ENCODE measurements at regions of chr17 and their contacts with region 1.

Region 1: DNA sequence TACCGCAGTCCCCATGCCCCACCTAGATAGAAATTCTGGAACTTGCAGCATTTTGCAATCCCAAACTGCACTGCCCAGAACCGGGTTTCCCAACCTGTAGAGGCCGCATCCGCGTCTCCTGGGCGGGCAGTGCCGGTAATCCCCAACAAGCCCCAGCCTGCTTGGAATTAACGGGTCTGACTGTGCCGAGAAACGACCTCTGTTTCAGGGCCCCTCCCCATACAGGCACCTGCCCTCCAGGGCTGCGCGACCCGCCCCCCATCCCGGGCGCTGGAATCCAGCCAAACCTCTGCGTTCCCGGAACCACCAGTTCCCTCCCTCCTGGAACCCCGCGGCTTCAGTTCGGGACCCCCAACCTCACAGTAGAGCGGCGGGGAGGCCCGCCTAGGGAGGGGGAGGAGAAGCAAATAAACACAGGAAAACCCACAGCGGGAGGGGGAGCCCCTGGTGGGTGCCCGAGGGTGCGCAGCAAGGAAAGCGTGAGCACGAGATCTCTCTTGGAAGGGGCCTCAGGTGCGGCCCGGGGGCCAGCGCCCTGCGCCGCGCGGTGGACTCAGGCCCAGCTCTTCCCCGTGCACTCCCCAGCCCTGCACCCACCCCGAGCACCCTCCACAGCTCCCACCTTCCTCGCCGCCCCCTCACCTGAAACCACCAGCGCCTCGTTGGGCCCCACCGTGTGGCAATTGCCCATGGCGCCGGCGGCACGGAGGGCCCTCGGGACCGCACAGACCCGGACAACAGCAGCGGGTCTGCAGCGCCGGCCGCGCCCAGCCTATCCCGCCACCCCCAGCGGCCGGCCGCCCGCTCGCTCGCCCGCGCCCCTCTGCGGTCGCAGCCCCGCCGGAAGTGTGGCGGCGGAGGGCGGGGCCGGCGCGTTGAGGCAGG is at the start of gene FLOT2:
- DNase-seq: peak; percentile 87
- H3K4me3 ChIP-seq: peak within 1 kb of the TSS; percentile 69 to 93 (median 83)
- H3K27ac ChIP-seq: peak within 1 kb of the TSS; percentile 82 to 96 (median 92)
- H3K4me1 ChIP-seq: peaks cover 0 to 35% (median 29%) of the 10 kb centered on the region in 4 donors
- H3K27me3 ChIP-seq: no peaks in the 10 kb centered on the region
- CTCF ChIP-seq: peak in 3 of 4 experiments; percentile 12 to 34 (median 27)
- EP300 ChIP-seq: peak in 2 of 4 donors; percentile 10 to 61
- POLR2A ChIP-seq: no peak
- total RNA-seq, gene FLOT2: 38.5 to 72.5 (median 52.4) TPM

Region 2: DNA sequence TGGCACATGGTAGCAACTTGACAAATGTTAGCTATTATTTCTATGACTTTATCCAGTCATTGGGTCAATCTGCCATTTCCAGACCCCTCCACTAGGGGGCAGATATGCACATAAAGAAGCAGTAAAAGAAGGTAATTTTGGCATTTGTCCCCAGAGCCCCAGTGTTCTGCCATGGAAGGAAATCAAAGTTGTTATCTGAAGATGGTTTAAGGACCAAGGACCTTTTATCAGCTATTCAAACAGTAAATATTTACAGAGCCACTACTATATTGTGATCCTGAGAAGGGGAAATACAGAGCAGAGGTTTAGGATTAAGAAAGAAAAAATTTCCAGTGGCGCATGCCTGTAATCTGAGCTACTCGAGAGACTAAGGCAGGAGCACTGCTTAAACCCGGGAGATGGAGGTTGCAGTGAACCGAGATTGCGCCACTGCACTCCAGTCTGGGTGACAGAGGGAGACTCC is 133.3 kb before region 1 on chr17:
- intact Hi-C with region 1: loop called (anchors 5 kb)
- DNase-seq: peak; percentile 88
- H3K4me3 ChIP-seq: no peak overlapping the region
- H3K27ac ChIP-seq: peak overlapping the region in 1 of 4 donors; percentile 27
- H3K4me1 ChIP-seq: peaks cover 0 to 18% (median 6%) of the 10 kb centered on the region in 4 donors
- H3K27me3 ChIP-seq: no peaks in the 10 kb centered on the region
- CTCF ChIP-seq: peak; percentile 65 to 86 (median 84)
- EP300 ChIP-seq: no peak
- POLR2A ChIP-seq: no peak

Region 3: DNA sequence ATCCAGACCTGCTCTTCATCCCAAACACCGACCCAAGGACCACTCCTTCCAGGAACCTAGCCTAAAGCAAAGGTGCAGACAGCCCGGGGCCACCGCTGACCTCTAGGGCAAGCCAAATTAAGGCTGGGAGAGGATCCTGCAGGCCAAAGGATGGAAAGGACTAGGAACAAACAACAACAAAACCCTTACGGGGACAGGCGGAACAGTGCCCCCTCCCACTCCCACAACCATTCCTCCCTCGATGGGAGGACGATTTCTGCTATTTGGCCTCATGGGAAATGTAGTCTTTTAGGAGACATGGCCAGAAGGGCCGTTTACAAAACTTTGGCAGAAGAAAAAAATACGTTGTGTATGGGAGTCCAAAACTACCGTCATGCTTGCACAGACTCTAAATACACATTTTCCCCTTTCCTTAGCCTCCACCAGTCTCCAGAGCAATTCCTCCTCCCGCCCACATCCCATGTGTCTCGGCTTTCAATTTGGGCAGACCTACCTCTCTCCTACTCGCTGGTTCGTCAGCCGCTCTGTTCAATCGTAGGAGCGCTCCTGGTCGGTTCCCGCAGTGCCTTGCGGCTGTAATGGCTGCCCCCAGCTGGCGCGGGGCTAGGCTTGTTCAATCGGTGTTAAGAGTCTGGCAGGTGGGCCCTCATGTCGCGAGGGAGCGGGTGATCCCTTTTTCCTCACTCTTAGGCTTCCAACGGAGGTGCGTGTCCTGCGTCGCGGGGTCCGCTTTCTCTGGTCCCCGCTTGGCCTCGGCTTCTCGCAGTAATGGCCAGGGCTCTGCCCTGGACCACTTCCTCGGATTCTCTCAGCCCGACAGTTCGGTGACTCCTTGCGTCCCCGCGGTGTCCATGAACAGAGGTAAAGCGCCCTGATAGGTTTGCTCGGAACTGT is 42.4 kb before region 1 on chr17 and contains the start of gene ERAL1:
- intact Hi-C with region 1: loop called (anchors 5 kb)
- DNase-seq: peak; percentile 93
- H3K4me3 ChIP-seq: peak within 1 kb of the TSS; percentile 45 to 90 (median 76)
- H3K27ac ChIP-seq: peak within 1 kb of the TSS; percentile 64 to 82 (median 82)
- H3K4me1 ChIP-seq: peaks cover 0 to 14% (median 10%) of the 10 kb centered on the region in 4 donors
- H3K27me3 ChIP-seq: no peaks in the 10 kb centered on the region
- CTCF ChIP-seq: no peak
- EP300 ChIP-seq: no peak
- POLR2A ChIP-seq: peak; percentile 41 to 58
- total RNA-seq, gene ERAL1: 20.2 to 41.9 (median 30.3) TPM

Region 4: GRCh38 chr17:28951991-28952975 is 55.2 kb after region 1 on chr17:
- intact Hi-C with region 1: loop called (anchors 2 kb)
- DNase-seq: peak; percentile 99
- H3K4me3 ChIP-seq: peak overlapping the region; percentile 40 to 96 (median 74)
- H3K27ac ChIP-seq: peak overlapping the region; percentile 90 to 97 (median 94)
- H3K4me1 ChIP-seq: peaks cover 0 to 27% (median 14%) of the 10 kb centered on the region in 4 donors
- H3K27me3 ChIP-seq: no peaks in the 10 kb centered on the region
- CTCF ChIP-seq: no peak
- EP300 ChIP-seq: peak in 1 of 4 donors; percentile 52
- POLR2A ChIP-seq: peak in 1 of 2 donors; percentile 4

Region 5: GRCh38 chr17:28963055-28963647 is 66.0 kb after region 1 on chr17:
- intact Hi-C with region 1: no loop called
- DNase-seq: peak; percentile 8
- H3K4me3 ChIP-seq: no peak overlapping the region
- H3K27ac ChIP-seq: no peak overlapping the region
- H3K4me1 ChIP-seq: no peaks in the 10 kb centered on the region
- H3K27me3 ChIP-seq: no peaks in the 10 kb centered on the region
- CTCF ChIP-seq: no peak
- EP300 ChIP-seq: no peak
- POLR2A ChIP-seq: no peak

Region 6: GRCh38 chr17:28982131-28982951 is 85.2 kb after region 1 on chr17:
- intact Hi-C with region 1: no loop called
- DNase-seq: no peak
- H3K4me3 ChIP-seq: no peak overlapping the region
- H3K27ac ChIP-seq: peak overlapping the region in 3 of 4 donors; percentile 1 to 42 (median 34)
- H3K4me1 ChIP-seq: no peaks in the 10 kb centered on the region
- H3K27me3 ChIP-seq: peaks cover 7 to 15% (median 13%) of the 10 kb centered on the region in 3 donors
- CTCF ChIP-seq: no peak
- EP300 ChIP-seq: peak in 2 of 4 donors; percentile 42 to 43
- POLR2A ChIP-seq: no peak

Region 7: GRCh38 chr17:29155227-29155965 is 258.3 kb after region 1 on chr17:
- intact Hi-C with region 1: no loop called
- DNase-seq: no peak
- H3K4me3 ChIP-seq: no peak overlapping the region
- H3K27ac ChIP-seq: peak overlapping the region; percentile 32 to 74 (median 56)
- H3K4me1 ChIP-seq: peaks cover 0 to 46% (median 43%) of the 10 kb centered on the region in 4 donors
- H3K27me3 ChIP-seq: no peaks in the 10 kb centered on the region
- CTCF ChIP-seq: no peak
- EP300 ChIP-seq: no peak
- POLR2A ChIP-seq: no peak

Measured in sigmoid colon (tissue), 7 donors.